PC-3 (cell line): ENCODE measurements at regions of chr2 and their contacts with region 1.

Region 1: GRCh38 chr2:161586517-161587167 is 37.6 kb upstream of the SLC4A10 start:
- DNase-seq: peak; percentile 55
- ATAC-seq: peak; percentile 60
- H3K4me3 ChIP-seq: no peak overlapping the region
- H3K27ac ChIP-seq: no peak overlapping the region
- H3K4me1 ChIP-seq: no peaks in the 10 kb centered on the region
- H3K27me3 ChIP-seq: no peaks in the 10 kb centered on the region
- CTCF ChIP-seq: peak; percentile 93

Region 2: DNA sequence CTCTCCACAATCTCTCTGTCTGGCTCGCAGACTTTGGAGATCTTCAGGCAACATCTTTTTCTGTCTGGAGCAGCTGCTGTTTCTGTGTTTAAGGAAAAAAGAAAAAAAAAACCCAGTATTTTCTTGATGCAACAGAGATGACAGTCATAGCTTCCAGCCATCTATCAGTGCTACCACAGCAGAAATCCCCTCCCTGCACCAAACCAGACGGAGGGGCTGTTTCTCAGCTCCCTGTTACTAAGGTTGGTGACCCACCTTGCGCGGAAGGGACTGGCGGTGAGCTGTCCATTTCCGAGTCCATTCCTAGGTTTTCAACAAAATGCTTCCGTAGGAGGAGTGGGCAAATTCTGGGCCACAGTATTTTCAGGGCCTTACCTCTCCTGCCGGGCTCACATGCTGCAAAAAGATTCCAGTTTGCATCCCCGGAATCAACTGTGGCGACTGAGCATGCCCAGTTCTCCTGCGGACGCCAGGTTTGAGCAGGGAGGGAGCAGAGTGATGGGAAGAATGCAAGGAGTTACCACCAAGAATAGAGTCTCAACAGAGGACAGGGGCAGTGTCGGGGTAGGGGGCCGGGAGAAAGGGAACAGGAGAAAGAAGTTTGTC is 38.8 kb after region 1 on chr2:
- CTCF ChIA-PET with region 1: no interaction called
- POLR2A ChIA-PET with region 1: no interaction called
- intact Hi-C with region 1: no loop called
- DNase-seq: no peak
- ATAC-seq: no peak
- H3K4me3 ChIP-seq: no peak overlapping the region
- H3K27ac ChIP-seq: no peak overlapping the region
- H3K4me1 ChIP-seq: 0 out of 2 replicates have a peak, but pooled peaks cover 8% of the 10 kb centered on the region
- H3K27me3 ChIP-seq: no peaks in the 10 kb centered on the region
- CTCF ChIP-seq: no peak

Region 3: DNA sequence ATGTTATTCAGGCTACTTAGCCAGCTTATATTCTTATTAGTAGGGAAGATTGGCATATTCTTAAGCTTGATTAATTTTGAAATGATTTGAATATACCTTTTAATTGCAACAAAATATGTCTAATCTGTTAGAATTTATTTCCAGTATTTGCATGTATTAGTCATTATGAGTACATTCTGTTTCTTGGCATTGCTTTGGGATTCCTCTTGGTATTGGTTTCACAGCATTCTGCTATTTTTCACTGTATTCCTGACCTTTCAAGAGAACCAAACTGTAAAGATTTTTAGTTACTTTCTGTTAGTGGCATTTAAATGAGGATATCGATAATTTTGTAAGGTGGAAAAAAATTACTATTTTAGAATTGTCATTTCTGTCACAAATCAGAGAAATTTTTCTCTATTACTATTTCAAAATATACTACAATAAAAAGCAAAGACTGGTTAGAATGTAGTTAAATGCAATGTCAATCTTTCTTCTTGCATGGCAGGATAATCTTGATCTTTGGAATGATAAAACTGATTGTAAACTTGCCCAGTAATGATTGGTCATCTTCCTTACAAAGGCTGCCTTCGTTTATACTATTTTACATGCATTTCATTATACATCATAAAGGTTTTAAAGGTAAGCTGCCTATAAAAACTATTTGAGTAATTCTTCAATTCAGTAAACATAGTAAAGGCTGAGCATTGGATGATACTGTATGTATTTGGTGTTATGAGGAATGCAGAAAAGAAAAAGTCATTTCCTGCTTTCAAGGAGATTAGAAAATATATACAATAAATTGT is 123.7 kb after region 1 on chr2:
- CTCF ChIA-PET with region 1: no interaction called
- POLR2A ChIA-PET with region 1: no interaction called
- intact Hi-C with region 1: loop called (anchors 5 kb)
- DNase-seq: peak; percentile 92
- ATAC-seq: peak; percentile 96
- H3K4me3 ChIP-seq: peak overlapping the region; percentile 52
- H3K27ac ChIP-seq: peak overlapping the region; percentile 92
- H3K4me1 ChIP-seq: peaks cover 50% of the 10 kb centered on the region
- H3K27me3 ChIP-seq: no peaks in the 10 kb centered on the region
- CTCF ChIP-seq: no peak

Region 4: DNA sequence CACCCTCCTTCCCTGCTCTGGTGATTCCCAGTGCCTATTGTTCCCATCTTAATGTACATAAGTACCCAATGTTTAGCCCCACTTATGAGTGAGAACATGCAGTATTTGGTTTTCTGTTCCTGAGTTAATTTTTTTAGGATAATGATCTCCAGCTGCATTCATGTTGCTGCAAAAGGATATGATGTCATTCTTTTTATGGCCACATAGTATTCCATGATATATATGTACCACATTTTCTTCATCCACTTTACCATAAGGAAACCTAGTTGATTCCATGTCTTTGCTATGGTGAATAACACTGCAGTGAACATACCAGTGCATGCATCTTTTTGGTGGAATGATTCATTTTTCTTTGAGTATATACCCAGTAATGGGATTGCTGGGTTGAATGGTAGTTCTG is 221.9 kb after region 1 on chr2:
- CTCF ChIA-PET with region 1: no interaction called
- POLR2A ChIA-PET with region 1: no interaction called
- intact Hi-C with region 1: loop called (anchors 10 kb)
- DNase-seq: no peak
- ATAC-seq: no peak
- H3K4me3 ChIP-seq: no peak overlapping the region
- H3K27ac ChIP-seq: no peak overlapping the region
- H3K4me1 ChIP-seq: peaks cover under 1% of the 10 kb centered on the region; the same call in 1 of the 2 replicates
- H3K27me3 ChIP-seq: no peaks in the 10 kb centered on the region
- CTCF ChIP-seq: no peak

Region 5: DNA sequence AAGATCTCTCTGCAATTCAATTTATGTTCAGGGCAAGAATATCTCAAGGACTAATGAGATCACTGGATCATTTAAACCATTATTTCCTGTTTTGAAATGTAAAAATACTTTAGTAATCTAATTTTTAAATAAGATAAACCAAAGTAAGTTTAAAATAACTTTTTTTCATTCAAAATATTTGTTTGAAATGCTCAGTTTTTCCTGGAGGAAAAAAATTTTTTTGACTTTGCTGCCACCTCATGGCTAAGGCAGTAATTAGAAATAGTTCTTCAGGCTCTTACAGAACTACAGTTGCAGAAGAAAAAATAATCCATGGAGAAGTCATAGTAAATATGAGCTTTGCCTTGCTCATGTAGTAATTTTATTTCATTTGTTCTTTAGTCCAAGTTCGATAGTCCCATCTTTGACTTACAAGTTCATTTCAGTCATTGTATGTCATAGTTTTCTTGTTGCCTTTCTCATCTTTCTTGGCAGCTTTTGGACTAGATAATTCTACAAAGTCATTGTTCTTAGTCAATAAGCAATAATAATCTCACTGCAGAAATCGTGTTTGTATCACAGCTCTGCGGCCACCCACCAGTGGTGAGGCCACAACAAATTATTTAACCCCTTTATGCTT is 360.0 kb after region 1 on chr2:
- CTCF ChIA-PET with region 1: interaction called, 5 read pairs
- POLR2A ChIA-PET with region 1: no interaction called
- intact Hi-C with region 1: loop called (anchors 1 kb)
- DNase-seq: peak; percentile 68
- ATAC-seq: 0 out of 2 replicates have a peak, but pooled peaks have one; percentile 43
- H3K4me3 ChIP-seq: no peak overlapping the region
- H3K27ac ChIP-seq: no peak overlapping the region
- H3K4me1 ChIP-seq: no peaks in the 10 kb centered on the region
- H3K27me3 ChIP-seq: no peaks in the 10 kb centered on the region
- CTCF ChIP-seq: peak; percentile 69

Region 6: GRCh38 chr2:162037028-162037795 is 450.6 kb after region 1 on chr2:
- CTCF ChIA-PET with region 1: no interaction called
- POLR2A ChIA-PET with region 1: no interaction called
- intact Hi-C with region 1: no loop called
- DNase-seq: no peak
- ATAC-seq: no peak
- H3K4me3 ChIP-seq: no peak overlapping the region
- H3K27ac ChIP-seq: no peak overlapping the region
- H3K4me1 ChIP-seq: no peaks in the 10 kb centered on the region
- H3K27me3 ChIP-seq: no peaks in the 10 kb centered on the region
- CTCF ChIP-seq: no peak

Region 7: GRCh38 chr2:162091325-162092007 is 504.8 kb after region 1 on chr2:
- CTCF ChIA-PET with region 1: no interaction called
- POLR2A ChIA-PET with region 1: no interaction called
- intact Hi-C with region 1: loop called (anchors 1 kb)
- DNase-seq: peak; percentile 92
- ATAC-seq: peak; percentile 72
- H3K4me3 ChIP-seq: peak overlapping the region; percentile 22; the same call in 1 of the 2 replicates
- H3K27ac ChIP-seq: peak overlapping the region; percentile 99
- H3K4me1 ChIP-seq: peaks cover 65% of the 10 kb centered on the region
- H3K27me3 ChIP-seq: no peaks in the 10 kb centered on the region
- CTCF ChIP-seq: peak; percentile 63

Region 8: GRCh38 chr2:162123806-162124758 is 537.4 kb after region 1 on chr2:
- CTCF ChIA-PET with region 1: interaction called, 3 read pairs
- POLR2A ChIA-PET with region 1: no interaction called
- intact Hi-C with region 1: loop called (anchors 2 kb)
- DNase-seq: peak; percentile 88
- ATAC-seq: peak; percentile 55
- H3K4me3 ChIP-seq: no peak overlapping the region
- H3K27ac ChIP-seq: no peak overlapping the region
- H3K4me1 ChIP-seq: peaks cover 18% of the 10 kb centered on the region
- H3K27me3 ChIP-seq: no peaks in the 10 kb centered on the region
- CTCF ChIP-seq: peak; percentile 91

Region 9: GRCh38 chr2:162301151-162301804 is 714.6 kb after region 1 on chr2:
- CTCF ChIA-PET with region 1: interaction called, 3 read pairs
- POLR2A ChIA-PET with region 1: no interaction called
- intact Hi-C with region 1: loop called (anchors 10 kb)
- DNase-seq: peak; percentile 72
- ATAC-seq: peak; percentile 83
- H3K4me3 ChIP-seq: peak overlapping the region; percentile 33
- H3K27ac ChIP-seq: no peak overlapping the region
- H3K4me1 ChIP-seq: no peaks in the 10 kb centered on the region; the same call in 1 of the 2 replicates
- H3K27me3 ChIP-seq: no peaks in the 10 kb centered on the region
- CTCF ChIP-seq: peak; percentile 92